Activated CD8-positive, alpha-beta T cell treated with anti-CD3 and anti-CD28 coated beads for 36 hours (primary cell): ENCODE measurements at regions of chr17 and their contacts with region 1.

Region 1: DNA sequence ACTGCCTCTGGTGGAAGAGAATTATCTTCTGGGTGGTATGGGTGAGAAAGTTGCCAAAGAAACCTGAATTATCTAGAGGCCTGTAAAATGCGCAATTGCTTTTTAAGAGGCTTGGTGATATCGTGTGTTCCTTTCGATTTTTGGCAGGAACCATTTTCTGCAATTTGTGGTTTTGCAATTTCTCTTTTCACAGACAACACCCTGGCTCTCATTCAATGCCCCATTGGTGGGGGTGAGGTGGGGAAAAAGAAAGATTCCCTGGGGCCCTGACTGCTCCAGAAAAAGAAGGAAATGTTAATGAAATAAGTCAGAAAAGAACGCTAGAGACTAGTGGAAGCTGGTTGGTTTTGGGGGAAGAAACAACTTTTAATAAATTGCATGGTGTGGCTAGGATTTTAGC is 77.4 kb downstream of the ANKFN1 start:
- DNase-seq: no peak
- ATAC-seq: no peak
- H3K4me3 Mint-ChIP-seq: no peak overlapping the region
- H3K27ac Mint-ChIP-seq: no peak overlapping the region
- H3K4me1 Mint-ChIP-seq: no peaks in the 10 kb centered on the region
- H3K27me3 Mint-ChIP-seq: no peaks in the 10 kb centered on the region
- CTCF ChIP-seq: no peak

Region 2: DNA sequence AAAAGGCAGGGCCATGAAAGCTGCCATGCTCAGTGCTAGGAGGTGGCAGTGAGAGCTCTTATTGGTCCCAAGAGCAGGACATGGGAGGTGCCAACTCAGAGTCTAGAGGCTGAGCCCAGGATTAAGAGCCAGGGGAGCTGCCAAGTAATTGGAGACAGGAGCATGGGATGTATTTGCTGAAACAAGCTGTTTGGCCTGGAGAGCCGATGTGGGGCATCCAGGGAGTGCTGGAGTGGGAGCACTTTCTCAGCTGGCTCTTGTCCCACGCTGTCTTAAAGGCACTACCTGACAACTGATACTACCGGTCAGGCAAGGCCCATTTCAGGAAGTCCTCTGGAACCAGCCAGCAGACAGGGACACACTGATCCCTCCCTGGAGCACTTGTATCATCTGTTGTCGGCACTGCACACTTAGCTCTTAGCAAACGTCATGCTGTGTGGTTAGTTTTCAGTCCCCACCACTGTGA is 58.1 kb before region 1 on chr17:
- CTCF ChIA-PET with region 1: no interaction called
- POLR2A ChIA-PET with region 1: no interaction called
- intact Hi-C with region 1: loop called (anchors 10 kb)
- DNase-seq: no peak
- ATAC-seq: no peak
- H3K4me3 Mint-ChIP-seq: no peak overlapping the region
- H3K27ac Mint-ChIP-seq: no peak overlapping the region
- H3K4me1 Mint-ChIP-seq: no peaks in the 10 kb centered on the region
- H3K27me3 Mint-ChIP-seq: peaks cover 8% of the 10 kb centered on the region
- CTCF ChIP-seq: no peak

Region 3: DNA sequence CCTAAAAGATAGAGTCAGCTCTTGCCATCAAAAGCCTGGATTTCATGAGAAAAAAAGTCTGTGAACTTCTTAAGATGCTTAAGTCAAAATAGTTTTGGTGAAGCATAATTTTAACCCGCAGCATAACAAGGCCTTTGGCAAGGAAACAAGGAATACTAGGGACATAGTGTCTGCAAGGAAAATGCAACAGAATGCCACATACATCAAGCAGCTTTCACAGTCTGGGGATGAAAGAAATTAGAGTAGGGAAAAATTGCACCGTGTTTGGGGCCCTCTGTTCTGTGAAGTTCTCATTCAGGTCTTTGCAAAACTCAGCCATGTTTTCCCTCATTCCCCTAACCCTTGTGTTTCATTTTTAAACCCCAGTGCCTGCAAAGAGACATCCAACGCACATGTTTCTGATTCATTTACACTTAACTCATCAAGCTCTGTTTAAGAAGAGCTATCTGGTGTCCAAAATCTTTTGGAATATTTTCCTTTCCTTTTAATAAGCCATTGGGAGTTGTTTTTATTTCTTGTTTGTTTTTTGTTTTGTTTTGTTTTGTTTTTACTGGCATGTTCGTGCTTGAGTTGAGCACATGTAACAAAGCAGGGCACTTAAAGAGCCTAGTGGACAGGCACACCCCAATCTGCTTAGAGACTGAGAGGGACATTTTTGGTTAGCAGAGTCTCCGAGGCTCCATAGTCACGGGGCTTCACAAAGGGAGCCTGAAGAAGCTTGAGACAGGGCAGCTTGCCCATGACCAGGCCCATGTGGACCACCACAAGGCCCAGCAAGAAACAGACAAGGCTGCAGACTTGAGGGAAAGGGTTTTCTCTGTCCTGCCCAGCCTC is 39.1 kb after region 1 on chr17:
- CTCF ChIA-PET with region 1: no interaction called
- POLR2A ChIA-PET with region 1: no interaction called
- intact Hi-C with region 1: no loop called
- DNase-seq: no peak
- ATAC-seq: no peak
- H3K4me3 Mint-ChIP-seq: no peak overlapping the region
- H3K27ac Mint-ChIP-seq: no peak overlapping the region
- H3K4me1 Mint-ChIP-seq: no peaks in the 10 kb centered on the region
- H3K27me3 Mint-ChIP-seq: peaks cover 4% of the 10 kb centered on the region
- CTCF ChIP-seq: no peak